ENCODE measurements at regions of chr12 and their contacts with region 1.

Region 1: GRCh38 chr12:96489103-96490056 is at the start of gene CFAP54:
- DNase-seq: peak; percentile 93 to 96 (median 96)
- H3K4me3 ChIP-seq: peak within 1 kb of the TSS; percentile 76 to 92 (median 84)
- H3K27ac ChIP-seq: peak within 1 kb of the TSS; percentile 38 to 77
- H3K4me1 ChIP-seq: peaks cover 2 to 14% (median 9%) of the 10 kb centered on the region in 4 experiments
- H3K27me3 ChIP-seq: peaks cover 0 to 4% (median 0%) of the 10 kb centered on the region in 5 experiments

Region 2: DNA sequence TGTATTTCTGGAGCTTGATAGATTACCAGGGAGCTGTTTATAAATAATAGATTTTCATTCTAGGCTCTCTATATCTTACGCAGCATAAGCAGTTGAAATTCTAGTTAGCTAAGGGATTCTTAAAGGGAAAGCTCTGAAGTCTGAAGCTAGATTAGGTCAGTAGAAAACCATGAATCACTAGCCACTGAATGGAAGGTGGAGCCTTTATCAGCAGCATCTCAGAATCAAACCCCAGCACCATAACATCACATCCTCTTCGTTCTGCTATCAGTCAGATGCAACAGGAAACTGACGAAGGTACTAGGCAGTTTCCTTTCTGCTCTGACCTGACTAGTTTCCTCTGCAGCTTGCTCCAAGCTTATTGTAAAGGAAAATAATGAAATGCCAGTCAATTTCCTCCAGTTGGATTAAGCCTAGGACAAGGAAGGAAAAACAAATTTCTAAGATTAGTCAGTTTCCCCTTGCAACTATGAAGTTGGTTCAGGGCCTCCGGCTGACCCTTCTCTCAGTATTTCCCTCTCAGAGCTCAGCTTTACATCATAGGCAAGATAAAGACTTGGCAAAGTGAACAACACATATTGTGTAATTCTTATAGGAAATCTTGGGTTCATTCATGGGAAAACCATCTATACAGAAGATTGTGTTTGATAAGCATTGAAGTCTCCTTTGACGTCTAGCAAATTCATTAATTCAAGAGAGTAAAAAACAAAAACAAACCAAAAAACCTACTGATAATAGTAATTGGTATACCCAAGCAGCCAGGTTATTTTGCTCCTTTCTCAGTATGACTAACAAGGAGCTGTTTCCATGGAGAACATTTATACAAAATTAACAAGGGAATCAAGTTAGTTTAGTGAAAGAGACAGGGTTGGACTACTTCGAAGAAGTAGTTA is 43.4 kb before region 1 on chr12:
- CTCF ChIA-PET with region 1: interaction called, 18 read pairs
- POLR2A ChIA-PET with region 1: interaction called, 6 read pairs
- DNase-seq: peak; percentile 97 to 99 (median 98)
- H3K4me3 ChIP-seq: peak overlapping the region in 2 of 7 experiments; percentile 37 to 43
- H3K27ac ChIP-seq: peak overlapping the region; percentile 95 to 96
- H3K4me1 ChIP-seq: peaks cover 4 to 23% (median 18%) of the 10 kb centered on the region in 4 experiments
- H3K27me3 ChIP-seq: no peaks in the 10 kb centered on the region

Region 3: GRCh38 chr12:96473394-96474093 is 15.8 kb before region 1 on chr12:
- CTCF ChIA-PET with region 1: no interaction called
- POLR2A ChIA-PET with region 1: no interaction called
- DNase-seq: no peak
- H3K4me3 ChIP-seq: no peak overlapping the region
- H3K27ac ChIP-seq: no peak overlapping the region
- H3K4me1 ChIP-seq: no peaks in the 10 kb centered on the region
- H3K27me3 ChIP-seq: no peaks in the 10 kb centered on the region

Region 4: GRCh38 chr12:96878704-96879103 is 389.3 kb after region 1 on chr12:
- CTCF ChIA-PET with region 1: no interaction called
- POLR2A ChIA-PET with region 1: no interaction called
- DNase-seq: no peak
- H3K4me3 ChIP-seq: no peak overlapping the region
- H3K27ac ChIP-seq: no peak overlapping the region
- H3K4me1 ChIP-seq: peaks cover 0 to 6% (median 2%) of the 10 kb centered on the region in 4 experiments
- H3K27me3 ChIP-seq: no peaks in the 10 kb centered on the region

Measured in common myeloid progenitor, CD34-positive (primary cell).